ENCODE measurements at regions of chr10 and their contacts with region 1.

Region 1: DNA sequence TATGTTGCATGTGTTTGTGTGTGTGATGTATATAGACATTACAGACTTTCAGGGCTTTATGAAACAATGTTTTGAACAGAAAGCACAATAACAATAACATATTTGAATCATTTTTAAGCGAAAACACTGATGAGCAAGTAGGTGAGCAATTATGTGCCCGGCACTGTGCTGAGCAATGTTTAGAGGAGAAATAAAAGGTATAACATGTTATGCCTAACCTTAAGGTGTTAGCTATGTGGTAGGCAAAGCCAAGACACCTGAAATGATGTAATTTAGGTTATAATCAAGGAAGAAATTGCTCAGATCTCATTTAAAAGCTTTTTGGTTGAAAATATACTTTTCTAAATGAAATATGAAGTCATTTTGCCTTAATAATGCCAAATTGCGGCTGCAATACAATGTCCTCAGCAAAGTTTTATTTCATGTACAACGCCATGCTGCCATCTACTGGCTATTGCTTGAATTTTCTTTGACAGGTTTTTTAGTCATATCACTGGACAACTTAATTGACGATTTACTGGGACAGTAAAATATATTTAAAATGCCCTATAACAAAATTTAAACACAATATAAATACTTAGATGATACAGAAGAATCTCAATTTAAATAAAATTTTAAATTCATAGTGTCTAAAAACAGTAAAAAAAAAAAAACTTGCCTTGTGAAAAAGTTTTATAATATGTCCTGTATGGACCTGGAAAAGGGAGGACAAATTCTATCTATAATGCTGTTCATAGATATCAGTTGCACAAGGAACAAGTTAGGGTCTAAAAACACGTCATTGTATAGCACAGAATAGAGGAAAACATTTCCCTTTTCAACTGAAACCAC is 131.1 kb upstream of the CDK1 start:
- DNase-seq: peak; percentile 83
- H3K4me3 ChIP-seq: no peak overlapping the region
- H3K27ac ChIP-seq: no peak overlapping the region
- H3K4me1 ChIP-seq: peaks cover 27% of the 10 kb centered on the region
- H3K27me3 ChIP-seq: no peaks in the 10 kb centered on the region
- CTCF ChIP-seq: peak; percentile 79

Region 2: DNA sequence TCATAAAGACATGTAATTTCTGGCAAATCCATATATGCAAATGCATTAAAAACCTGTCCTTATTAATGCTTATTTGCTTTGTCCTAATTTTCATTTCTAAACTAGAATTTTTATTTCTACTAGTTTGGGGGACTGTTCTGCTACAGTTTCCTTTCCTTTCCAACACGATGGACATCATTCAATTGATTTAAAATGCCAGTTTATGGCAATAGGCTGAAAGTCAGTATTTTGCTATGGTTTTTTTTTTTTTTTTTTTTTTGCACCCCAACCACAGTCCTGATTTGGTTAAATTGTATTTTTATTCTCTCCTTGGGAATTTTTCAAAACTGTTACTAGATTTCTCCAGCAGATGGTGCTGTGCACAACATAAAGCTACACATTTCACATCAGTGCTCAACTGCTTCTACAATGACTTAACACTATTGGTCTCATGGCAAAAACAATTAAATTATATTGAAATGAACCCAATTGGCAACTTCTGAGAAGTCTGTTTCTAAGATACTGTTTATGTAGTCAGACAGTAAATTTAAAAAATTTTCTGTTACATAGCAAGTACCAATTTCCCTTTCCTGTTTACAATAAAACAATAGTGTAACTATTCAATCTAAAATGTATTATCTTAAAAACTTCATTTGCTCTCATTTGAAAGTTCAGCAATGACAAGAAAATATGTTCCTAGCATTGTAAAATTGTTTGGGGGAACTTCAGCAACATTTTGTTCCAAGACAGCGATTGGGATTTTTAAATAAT is 547.0 kb before region 1 on chr10:
- CTCF ChIA-PET with region 1: interaction called, 4 read pairs
- POLR2A ChIA-PET with region 1: no interaction called
- intact Hi-C with region 1: loop called (anchors 5 kb)
- DNase-seq: peak; percentile 78
- H3K4me3 ChIP-seq: no peak overlapping the region
- H3K27ac ChIP-seq: no peak overlapping the region
- H3K4me1 ChIP-seq: no peaks in the 10 kb centered on the region
- H3K27me3 ChIP-seq: no peaks in the 10 kb centered on the region
- CTCF ChIP-seq: peak; percentile 74

Region 3: DNA sequence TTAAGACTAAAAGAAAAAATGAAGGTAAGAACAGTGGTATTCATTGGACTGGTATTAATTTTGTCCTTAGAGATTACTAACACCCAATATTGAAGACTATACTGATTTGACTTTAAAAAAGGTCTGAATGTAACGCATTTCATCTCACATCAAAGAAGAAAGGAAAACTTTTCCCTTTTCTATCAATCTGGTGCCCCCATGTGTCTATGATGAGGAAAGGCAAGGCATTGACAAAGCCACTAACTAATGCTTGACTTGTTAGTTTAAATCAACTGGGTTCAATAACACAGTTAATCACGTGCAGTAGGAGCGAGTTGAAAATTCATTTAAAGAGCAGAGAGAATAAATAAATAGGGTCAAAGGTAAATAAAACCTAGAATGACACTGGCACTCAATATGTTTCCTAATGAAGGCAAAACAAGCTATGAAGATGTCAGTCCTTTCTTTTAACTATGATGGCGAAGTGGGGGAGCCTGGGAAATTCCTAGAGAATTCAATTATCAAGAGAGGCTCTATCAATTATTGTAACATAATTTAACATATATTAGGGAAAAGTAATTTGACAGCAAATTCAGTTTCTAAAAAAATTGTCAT is 438.4 kb before region 1 on chr10:
- CTCF ChIA-PET with region 1: no interaction called
- POLR2A ChIA-PET with region 1: no interaction called
- intact Hi-C with region 1: loop called (anchors 5 kb)
- DNase-seq: peak; percentile 60
- H3K4me3 ChIP-seq: no peak overlapping the region
- H3K27ac ChIP-seq: no peak overlapping the region
- H3K4me1 ChIP-seq: no peaks in the 10 kb centered on the region
- H3K27me3 ChIP-seq: no peaks in the 10 kb centered on the region
- CTCF ChIP-seq: peak; percentile 80

Region 4: GRCh38 chr10:60444494-60445064 is 202.6 kb before region 1 on chr10:
- CTCF ChIA-PET with region 1: interaction called, 10 read pairs
- POLR2A ChIA-PET with region 1: no interaction called
- intact Hi-C with region 1: loop called (anchors 1 kb)
- DNase-seq: peak; percentile 68
- H3K4me3 ChIP-seq: no peak overlapping the region
- H3K27ac ChIP-seq: no peak overlapping the region
- H3K4me1 ChIP-seq: peaks cover 25% of the 10 kb centered on the region
- H3K27me3 ChIP-seq: no peaks in the 10 kb centered on the region
- CTCF ChIP-seq: peak; percentile 79

Region 5: GRCh38 chr10:60532696-60533468 is 114.3 kb before region 1 on chr10:
- CTCF ChIA-PET with region 1: no interaction called
- POLR2A ChIA-PET with region 1: interaction called, 12 read pairs
- intact Hi-C with region 1: no loop called
- DNase-seq: no peak
- H3K4me3 ChIP-seq: no peak overlapping the region
- H3K27ac ChIP-seq: no peak overlapping the region
- H3K4me1 ChIP-seq: peaks cover 7% of the 10 kb centered on the region
- H3K27me3 ChIP-seq: no peaks in the 10 kb centered on the region
- CTCF ChIP-seq: no peak

Region 6: GRCh38 chr10:60549686-60550085 is 97.5 kb before region 1 on chr10:
- CTCF ChIA-PET with region 1: no interaction called
- POLR2A ChIA-PET with region 1: no interaction called
- intact Hi-C with region 1: loop called (anchors 10 kb)
- DNase-seq: peak; percentile 51
- H3K4me3 ChIP-seq: no peak overlapping the region
- H3K27ac ChIP-seq: no peak overlapping the region
- H3K4me1 ChIP-seq: no peaks in the 10 kb centered on the region
- H3K27me3 ChIP-seq: no peaks in the 10 kb centered on the region
- CTCF ChIP-seq: peak; percentile 60

Region 7: GRCh38 chr10:60769406-60769805 is 122.2 kb after region 1 on chr10:
- CTCF ChIA-PET with region 1: no interaction called
- POLR2A ChIA-PET with region 1: no interaction called
- intact Hi-C with region 1: loop called (anchors 2 kb)
- DNase-seq: no peak
- H3K4me3 ChIP-seq: no peak overlapping the region
- H3K27ac ChIP-seq: no peak overlapping the region
- H3K4me1 ChIP-seq: peaks cover 6% of the 10 kb centered on the region
- H3K27me3 ChIP-seq: no peaks in the 10 kb centered on the region
- CTCF ChIP-seq: no peak

Region 8: DNA sequence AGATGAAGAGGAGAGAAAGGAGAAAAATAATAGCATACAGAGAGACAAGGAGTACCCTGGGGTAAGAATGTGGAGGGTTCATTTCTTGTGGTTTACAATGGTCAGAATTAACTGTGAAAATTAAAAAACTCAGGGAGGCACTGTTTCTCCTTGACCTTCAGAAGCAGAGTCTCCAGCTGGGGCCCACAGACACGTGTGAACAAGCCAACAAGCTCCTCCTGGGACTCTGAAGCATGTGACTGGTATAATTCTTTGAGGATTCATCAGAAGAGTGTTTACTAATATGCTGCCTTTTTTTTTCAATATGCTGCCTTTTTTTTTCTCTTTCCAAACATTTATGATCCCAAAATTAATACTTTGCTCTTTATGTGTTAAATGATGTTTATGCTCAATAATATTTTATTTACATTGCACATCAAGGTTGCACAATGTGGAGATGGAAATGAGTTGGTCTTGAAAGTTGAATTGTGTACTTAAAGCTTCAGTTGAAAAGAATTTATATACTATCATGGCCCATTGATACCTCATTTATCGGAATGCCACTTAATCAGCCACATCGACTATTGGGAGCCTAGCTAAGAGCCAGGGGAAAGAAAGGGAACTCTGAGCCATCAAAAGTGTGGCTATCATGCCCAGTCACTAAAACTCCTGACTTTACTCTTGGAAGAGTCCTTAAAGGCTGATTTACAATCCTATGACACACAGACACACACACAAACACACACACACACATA is 431.5 kb after region 1 on chr10:
- CTCF ChIA-PET with region 1: no interaction called
- POLR2A ChIA-PET with region 1: no interaction called
- intact Hi-C with region 1: no loop called
- DNase-seq: peak; percentile 12
- H3K4me3 ChIP-seq: no peak overlapping the region
- H3K27ac ChIP-seq: no peak overlapping the region
- H3K4me1 ChIP-seq: no peaks in the 10 kb centered on the region
- H3K27me3 ChIP-seq: no peaks in the 10 kb centered on the region
- CTCF ChIP-seq: no peak

Measured in A673 (cell line).